Activated naive CD4-positive, alpha-beta T cell treated with anti-CD3 and anti-CD28 coated beads for 36 hours (primary cell): ENCODE measurements at regions of chr17 and their contacts with region 1.

Region 1: DNA sequence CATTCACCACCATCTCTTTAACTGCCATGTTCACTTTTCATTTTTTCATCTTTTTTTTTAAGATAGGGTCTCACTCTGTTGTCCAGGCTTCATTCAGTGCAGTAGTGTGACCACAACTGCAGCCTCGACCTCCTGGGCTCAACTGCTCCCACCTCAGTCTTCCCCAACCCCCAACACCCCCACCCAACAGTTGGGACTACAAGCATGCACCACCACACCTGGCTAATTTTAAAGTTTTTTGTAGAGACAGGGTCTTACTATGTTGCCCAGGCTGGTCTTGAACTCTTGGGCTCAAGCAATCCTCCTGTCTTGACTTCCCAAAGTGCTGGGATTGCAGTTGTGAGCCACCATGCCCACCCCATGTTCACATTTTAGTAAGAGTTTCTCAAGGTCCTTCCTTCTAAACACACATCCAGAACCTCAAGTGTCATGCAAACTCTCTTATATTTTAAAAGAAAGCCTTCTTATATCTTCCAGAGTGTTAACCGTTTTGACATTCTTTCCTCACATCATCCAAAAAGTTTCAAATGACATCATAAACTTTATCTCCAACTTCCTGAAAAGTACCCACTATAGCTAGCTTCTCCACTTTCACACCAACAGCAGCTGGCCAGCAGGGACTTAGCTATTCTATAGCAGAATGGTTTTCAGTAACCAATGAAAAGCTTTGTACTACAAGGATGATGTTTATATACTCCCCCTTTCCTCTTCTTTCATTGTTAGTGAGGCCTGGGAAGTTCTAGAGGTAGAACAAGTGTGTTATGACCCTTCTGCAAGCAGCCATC is 49.3 kb downstream of the TRAF4 start:
- DNase-seq: no peak
- H3K4me3 Mint-ChIP-seq: no peak overlapping the region
- H3K27ac Mint-ChIP-seq: no peak overlapping the region
- H3K4me1 Mint-ChIP-seq: peaks cover 29% of the 10 kb centered on the region
- H3K27me3 Mint-ChIP-seq: no peaks in the 10 kb centered on the region

Region 2: DNA sequence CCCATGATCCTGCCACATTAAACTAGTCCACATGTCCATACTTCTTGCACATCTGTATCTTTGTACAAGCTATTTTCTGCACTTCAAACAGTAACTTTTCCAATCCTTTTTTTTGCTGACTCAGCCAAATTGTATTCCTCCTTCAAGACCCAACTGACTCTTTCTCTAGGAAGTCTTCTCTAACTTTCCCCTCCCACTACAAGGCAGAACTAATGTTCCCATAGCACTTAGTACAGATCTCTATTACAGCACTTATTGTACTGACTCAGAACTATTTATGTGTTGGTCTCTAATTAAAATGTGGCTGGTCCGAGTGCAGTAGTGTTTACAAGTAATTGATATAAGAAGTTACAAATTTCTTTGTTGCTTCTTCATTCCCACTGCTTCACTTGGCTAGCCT is 41.4 kb after region 1 on chr17:
- CTCF ChIA-PET with region 1: no interaction called
- intact Hi-C with region 1: loop called (anchors 5 kb)
- DNase-seq: no peak
- H3K4me3 Mint-ChIP-seq: no peak overlapping the region
- H3K27ac Mint-ChIP-seq: no peak overlapping the region
- H3K4me1 Mint-ChIP-seq: peaks cover 16% of the 10 kb centered on the region
- H3K27me3 Mint-ChIP-seq: no peaks in the 10 kb centered on the region